ENCODE measurements at regions of chr6 and their contacts with region 1.

Region 1: GRCh38 chr6:155314092-155314772 is at the start of gene TFB1M:
- DNase-seq: peak; percentile 98 to 100 (median 98)

Region 2: DNA sequence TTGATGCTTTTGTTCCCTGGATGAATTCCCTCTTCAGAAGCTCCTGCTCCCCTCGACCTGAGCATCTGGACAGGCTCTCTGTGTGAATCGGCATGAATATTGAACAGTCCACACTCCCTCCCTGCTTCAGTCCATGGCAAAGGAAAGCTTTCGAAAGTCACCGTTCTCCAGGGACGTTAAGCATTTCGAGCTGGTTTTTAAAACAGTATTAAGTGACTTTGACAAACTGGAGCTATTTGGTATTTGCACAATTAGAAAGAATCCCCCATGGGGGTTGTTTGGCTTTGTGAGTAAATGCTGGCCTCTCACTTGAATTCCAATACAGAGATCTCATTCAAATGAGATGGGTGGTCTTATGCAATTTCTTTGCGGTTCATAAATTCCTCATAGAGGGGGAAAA is 404.4 kb before region 1 on chr6:
- intact Hi-C with region 1: no loop called
- DNase-seq: no peak

Region 3: DNA sequence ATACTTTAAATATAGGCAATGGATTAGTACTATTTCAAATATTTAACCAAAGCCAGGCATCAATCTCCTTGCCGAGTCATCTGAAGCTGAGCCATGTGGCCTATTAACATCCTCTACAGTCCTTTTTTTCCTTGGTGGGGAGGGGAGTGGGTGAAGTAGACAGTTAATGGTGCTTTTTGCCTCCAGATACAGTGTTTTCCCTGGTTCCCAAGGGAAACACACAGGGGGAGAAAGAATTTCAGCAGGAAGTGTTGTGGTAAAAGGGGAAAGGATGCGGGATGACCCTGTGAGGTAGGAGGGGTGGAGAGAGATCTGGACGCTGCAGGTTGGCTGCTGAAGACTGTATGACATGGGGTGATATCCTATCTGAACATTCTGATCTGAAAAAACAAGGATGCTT is 40.8 kb before region 1 on chr6:
- intact Hi-C with region 1: loop called (anchors 5 kb)
- DNase-seq: no peak

Region 4: GRCh38 chr6:155936551-155936950 is 622.3 kb after region 1 on chr6:
- intact Hi-C with region 1: no loop called
- DNase-seq: no peak

Measured in posterior cingulate gyrus (tissue), 11 donors.